ENCODE measurements at regions of chr18 and their contacts with region 1.

Region 1: DNA sequence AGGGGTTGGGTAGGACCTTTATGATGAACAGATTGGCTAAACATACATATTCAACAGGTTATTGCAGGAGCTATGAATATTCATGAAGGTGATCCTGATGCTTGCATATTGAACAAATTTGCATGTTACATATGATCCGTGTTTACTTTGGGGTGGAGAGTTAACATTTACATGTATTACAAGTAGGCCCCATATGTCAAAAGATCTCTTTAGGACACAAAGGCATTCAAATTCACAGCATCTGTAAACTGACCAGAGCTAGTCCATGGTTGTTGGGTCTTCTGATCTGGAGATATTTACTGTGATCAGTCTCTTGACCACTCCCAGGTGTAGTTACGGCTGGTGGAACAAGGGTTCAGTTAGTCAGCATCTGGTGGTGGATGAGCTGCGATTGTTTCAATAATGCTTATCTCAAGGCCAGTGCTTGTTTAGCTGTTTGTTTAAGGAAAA is 80.4 kb downstream of the PMAIP1 start:
- DNase-seq: no peak
- ATAC-seq: no peak
- H3K4me3 ChIP-seq: no peak overlapping the region
- H3K27ac ChIP-seq: no peak overlapping the region
- H3K4me1 ChIP-seq: no peaks in the 10 kb centered on the region
- H3K27me3 ChIP-seq: no peaks in the 10 kb centered on the region
- CTCF ChIP-seq: no peak
- POLR2A ChIP-seq: no peak
- RAD21 ChIP-seq: no peak

Region 2: GRCh38 chr18:59846814-59847490 is 133.3 kb before region 1 on chr18:
- CTCF ChIA-PET with region 1: no interaction called
- POLR2A ChIA-PET with region 1: no interaction called
- dilution Hi-C with region 1: no loop called
- in situ Hi-C with region 1: loop called (anchors 5 kb)
- intact Hi-C with region 1: no loop called
- DNase-seq: peak; percentile 73
- ATAC-seq: peak; percentile 93
- H3K4me3 ChIP-seq: no peak overlapping the region
- H3K27ac ChIP-seq: no peak overlapping the region
- H3K4me1 ChIP-seq: peaks cover 6% of the 10 kb centered on the region; the same call in 1 of the 2 replicates
- H3K27me3 ChIP-seq: no peaks in the 10 kb centered on the region
- CTCF ChIP-seq: no peak
- POLR2A ChIP-seq: no peak
- RAD21 ChIP-seq: no peak

Region 3: GRCh38 chr18:60027397-60027796 is 47.2 kb after region 1 on chr18:
- CTCF ChIA-PET with region 1: no interaction called
- POLR2A ChIA-PET with region 1: no interaction called
- dilution Hi-C with region 1: no loop called
- in situ Hi-C with region 1: no loop called
- intact Hi-C with region 1: loop called (anchors 5 kb)
- DNase-seq: no peak
- ATAC-seq: no peak
- H3K4me3 ChIP-seq: no peak overlapping the region
- H3K27ac ChIP-seq: no peak overlapping the region
- H3K4me1 ChIP-seq: 0 out of 2 replicates have a peak, but pooled peaks cover 2% of the 10 kb centered on the region
- H3K27me3 ChIP-seq: no peaks in the 10 kb centered on the region
- CTCF ChIP-seq: no peak
- POLR2A ChIP-seq: no peak
- RAD21 ChIP-seq: no peak